ENCODE measurements at regions of chr7 and their contacts with region 1.

Region 1: DNA sequence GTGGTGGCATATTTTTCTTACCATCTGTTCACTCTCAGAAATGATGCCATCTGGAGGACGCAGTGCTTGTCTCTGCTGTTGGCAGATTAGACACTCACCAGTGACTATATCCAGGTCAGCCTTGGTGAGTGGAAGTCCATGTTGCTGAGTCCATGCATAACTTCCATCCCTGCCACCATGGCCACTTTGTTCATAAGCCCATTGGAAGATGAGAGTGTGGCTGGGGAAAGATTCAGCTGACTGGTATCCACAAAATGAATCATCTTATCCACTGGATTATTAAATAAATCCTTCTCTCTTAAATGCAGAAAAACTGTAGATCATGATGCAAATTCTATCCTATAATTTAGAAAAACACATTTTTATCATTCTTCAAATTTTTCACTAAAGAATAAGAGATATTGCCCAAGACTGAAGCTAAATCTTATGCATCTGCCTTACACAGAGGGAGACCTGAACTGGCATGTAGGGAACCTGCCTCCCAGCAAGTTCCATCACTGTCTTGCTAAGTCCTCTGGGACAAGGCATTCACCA is 726.9 kb downstream of the TNS3 start:
- DNase-seq: no peak
- H3K4me3 ChIP-seq: no peak overlapping the region
- H3K27ac ChIP-seq: no peak overlapping the region
- H3K4me1 ChIP-seq: no peaks in the 10 kb centered on the region
- H3K27me3 ChIP-seq: no peaks in the 10 kb centered on the region
- CTCF ChIP-seq: no peak

Region 2: DNA sequence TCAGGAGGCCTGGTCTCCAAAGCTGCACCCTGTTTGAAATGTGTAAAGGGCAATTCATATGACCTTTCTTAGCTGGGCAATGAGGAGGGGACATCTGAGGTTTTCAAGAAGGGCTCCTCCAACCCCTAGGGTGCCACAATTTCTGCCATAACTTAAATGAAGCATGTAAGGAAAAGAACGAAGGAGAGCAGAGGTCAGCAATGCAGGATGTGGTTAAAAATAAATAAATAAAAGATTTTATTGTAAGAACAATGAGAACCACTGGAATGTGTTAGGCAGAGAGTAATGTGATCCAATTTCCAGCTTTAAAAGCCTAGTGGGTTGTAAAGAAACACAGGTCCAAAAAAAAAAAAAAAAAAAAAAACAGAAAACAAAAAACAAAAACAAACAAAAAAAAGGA is 53.7 kb after region 1 on chr7:
- CTCF ChIA-PET with region 1: no interaction called
- POLR2A ChIA-PET with region 1: no interaction called
- intact Hi-C with region 1: loop called (anchors 5 kb)
- DNase-seq: peak; percentile 81
- H3K4me3 ChIP-seq: no peak overlapping the region
- H3K27ac ChIP-seq: peak overlapping the region; percentile 87
- H3K4me1 ChIP-seq: peaks cover 27% of the 10 kb centered on the region
- H3K27me3 ChIP-seq: no peaks in the 10 kb centered on the region
- CTCF ChIP-seq: no peak